ENCODE measurements at regions of chr18 and their contacts with region 1.

Region 1: DNA sequence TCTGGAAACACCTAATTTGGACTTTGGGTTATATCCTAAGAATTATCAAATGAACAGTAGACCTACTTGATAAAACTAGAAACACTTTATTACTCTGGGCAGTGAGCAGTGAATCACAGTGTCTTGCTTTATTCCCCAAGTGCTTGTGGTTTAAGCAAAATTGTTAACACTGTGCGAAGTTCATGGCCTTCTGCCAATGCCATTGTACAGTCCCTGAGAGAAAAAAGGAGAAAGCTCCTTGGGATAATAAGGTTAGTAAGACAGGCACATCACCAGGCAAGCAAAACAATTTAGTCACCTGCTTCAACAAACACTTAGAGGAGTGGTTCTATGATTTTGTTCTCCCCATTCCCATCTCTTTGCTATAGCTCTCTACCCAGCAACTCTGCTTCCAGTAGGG is 39.8 kb downstream of the ADCYAP1 start:
- DNase-seq: no peak
- H3K4me3 ChIP-seq: no peak overlapping the region
- H3K27ac ChIP-seq: no peak overlapping the region
- H3K4me1 ChIP-seq: no peaks in the 10 kb centered on the region
- H3K27me3 ChIP-seq: no peaks in the 10 kb centered on the region
- CTCF ChIP-seq: no peak
- EP300 ChIP-seq: no peak
- POLR2A ChIP-seq: no peak

Region 2: DNA sequence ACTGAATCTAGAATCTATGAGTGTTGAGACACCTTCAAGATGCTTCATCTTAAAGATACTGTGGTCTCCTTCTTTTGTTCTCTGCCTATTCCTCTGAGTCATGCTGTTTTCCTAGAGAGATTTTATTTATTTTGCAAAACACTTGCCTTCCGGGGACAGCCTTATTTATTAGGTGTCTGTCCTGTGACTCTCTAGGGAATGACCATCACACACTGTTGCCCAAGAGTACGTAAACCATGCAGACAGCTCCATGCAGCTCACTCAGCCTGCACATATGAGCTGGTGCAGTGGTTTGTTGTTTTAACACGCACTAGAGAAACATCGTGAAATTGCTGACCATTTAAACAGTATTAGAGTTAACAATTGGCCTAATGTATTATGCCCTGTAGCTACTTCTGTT is 52.1 kb before region 1 on chr18:
- in situ Hi-C with region 1: no loop called
- intact Hi-C with region 1: loop called (anchors 10 kb)
- DNase-seq: no peak
- H3K4me3 ChIP-seq: no peak overlapping the region
- H3K27ac ChIP-seq: no peak overlapping the region
- H3K4me1 ChIP-seq: no peaks in the 10 kb centered on the region
- H3K27me3 ChIP-seq: peaks cover 9% of the 10 kb centered on the region
- CTCF ChIP-seq: no peak
- EP300 ChIP-seq: no peak
- POLR2A ChIP-seq: no peak